ENCODE measurements at regions of chr13 and their contacts with region 1.

Region 1: GRCh38 chr13:25037057-25037813 is 58.7 kb upstream of the PABPC3 start:
- DNase-seq: peak; percentile 59
- H3K4me3 Mint-ChIP-seq: no peak overlapping the region
- H3K27ac Mint-ChIP-seq: no peak overlapping the region
- H3K4me1 Mint-ChIP-seq: no peaks in the 10 kb centered on the region
- H3K27me3 Mint-ChIP-seq: peaks cover 41% of the 10 kb centered on the region

Region 2: DNA sequence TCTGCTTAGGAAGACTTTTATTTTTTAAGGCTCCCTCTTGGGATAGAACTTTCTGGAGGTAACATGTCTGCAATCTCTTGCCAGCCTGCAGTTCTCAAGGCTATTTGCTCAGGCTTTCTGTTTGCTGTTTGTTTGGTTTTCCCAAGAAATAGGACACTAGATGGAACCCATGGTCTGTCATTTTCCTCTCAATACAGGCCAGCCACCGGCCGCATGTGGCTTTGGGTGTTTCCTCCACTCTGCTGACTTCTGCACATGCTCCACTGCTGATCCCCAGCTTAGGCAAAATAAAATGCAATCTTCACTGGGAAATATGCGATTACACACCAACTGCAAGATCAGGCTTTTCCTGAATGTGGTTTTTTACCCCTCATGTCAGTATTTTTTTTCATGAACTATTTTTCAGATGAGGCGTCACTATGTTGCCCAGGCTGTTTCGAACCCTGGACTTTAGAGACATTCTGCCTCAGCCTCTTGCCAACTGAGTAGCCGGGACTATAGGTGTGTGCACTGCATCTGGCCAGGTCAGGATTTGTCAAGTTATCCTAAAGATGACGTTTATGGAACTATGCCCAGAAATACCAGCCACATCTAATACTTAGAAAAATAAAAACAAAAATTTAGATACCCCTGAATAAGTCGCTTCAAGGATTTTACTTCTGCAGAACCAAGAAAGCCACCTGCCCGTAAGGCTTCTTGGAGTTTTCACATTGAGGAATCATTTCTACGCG is 35.6 kb before region 1 on chr13:
- CTCF ChIA-PET with region 1: interaction called, 26 read pairs
- POLR2A ChIA-PET with region 1: no interaction called
- DNase-seq: no peak
- H3K4me3 Mint-ChIP-seq: no peak overlapping the region
- H3K27ac Mint-ChIP-seq: no peak overlapping the region
- H3K4me1 Mint-ChIP-seq: peaks cover 8% of the 10 kb centered on the region
- H3K27me3 Mint-ChIP-seq: peaks cover 50% of the 10 kb centered on the region

Measured in activated CD4-positive, alpha-beta memory T cell treated with anti-CD3 and anti-CD28 coated beads, Interleukin-2, amount 10 ng/mL, durations not matched to agents 7 days and 5 days (primary cell).